ENCODE measurements at regions of chr9 and their contacts with region 1.

Region 1: GRCh38 chr9:77433675-77434445 is 214.3 kb downstream of the GNA14 start:
- DNase-seq: peak; percentile 71
- ATAC-seq: peak; percentile 86

Region 2: DNA sequence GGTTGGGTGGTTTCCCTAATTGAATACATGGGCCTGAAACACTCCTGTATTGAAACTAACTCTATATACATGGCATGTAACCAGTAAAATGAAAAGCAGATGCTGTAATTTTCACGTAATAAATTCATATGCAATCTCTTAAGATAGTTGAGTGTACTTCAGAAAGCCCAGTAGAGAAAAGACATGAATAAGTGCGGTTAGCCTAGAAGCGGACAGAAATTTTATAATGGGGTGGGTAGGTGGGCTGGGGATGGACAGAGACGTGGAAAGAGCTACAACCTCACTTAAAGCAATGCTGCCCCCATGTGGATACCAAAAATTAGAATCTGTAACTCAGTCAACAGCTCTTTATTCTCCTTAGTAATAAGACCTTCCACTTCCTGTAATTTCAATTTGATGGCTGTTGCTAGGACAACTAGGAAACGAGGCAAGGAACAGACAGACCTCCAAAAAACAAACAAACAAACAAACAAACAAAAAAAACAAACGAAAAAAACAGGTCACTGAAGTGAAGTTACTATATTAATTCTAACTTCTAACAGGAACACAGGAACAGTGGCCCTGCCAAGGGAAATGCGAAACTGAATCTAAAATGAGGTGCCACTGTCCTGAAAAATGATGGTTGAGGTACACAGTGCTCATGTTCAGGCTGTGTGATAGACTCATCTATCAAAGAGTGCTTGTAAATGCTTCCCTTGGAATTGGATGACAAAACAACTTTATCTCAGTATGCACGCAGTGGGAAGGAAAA is 317.7 kb after region 1 on chr9:
- intact Hi-C with region 1: loop called (anchors 10 kb)
- DNase-seq: no peak
- ATAC-seq: peak; percentile 77

Measured in Right ventricle myocardium superior (tissue), 1 donor.